ENCODE measurements at regions of chr2 and their contacts with region 1.

Region 1: DNA sequence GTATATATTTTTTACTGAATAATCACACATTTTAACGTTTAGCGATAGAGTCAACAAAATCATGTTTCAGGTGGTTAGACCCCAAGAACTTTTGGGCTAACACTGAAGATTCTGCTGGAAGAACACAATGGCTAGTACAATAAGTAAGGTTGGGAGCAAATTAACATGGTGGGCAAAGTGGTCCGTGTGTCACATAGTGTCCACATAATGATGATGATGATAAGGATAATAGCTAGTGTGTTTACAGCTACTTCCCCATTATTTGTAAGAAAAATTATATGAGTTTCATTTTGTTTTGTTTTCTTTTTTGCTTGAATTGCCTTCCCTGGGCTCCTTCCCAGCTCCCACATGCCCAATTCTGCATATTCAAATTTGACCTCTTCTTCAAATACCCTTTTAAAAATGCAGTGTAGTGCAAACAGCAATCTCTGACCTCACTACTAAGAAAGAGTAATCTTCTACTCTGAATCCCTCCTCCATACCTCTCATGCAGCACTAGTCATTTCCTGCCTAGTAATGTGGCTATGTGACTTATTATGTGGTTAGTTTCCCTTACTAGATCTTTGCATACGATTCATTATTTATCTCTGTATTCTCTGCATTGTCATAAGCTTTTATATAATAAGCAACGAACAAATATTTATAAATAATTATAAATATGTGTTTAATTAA is 16.9 kb upstream of the VPS54 start:
- DNase-seq: peak in 7 of 9 donors; percentile 60 to 75 (median 64)
- ATAC-seq: peak; percentile 98
- H3K4me3 ChIP-seq: peak overlapping the region; percentile 25
- H3K4me3 Mint-ChIP-seq: peak overlapping the region; percentile 30 to 86 (median 60)
- H3K27ac ChIP-seq: peak overlapping the region; percentile 54
- H3K27ac Mint-ChIP-seq: peak overlapping the region; percentile 49 to 93 (median 83)
- H3K4me1 ChIP-seq: peaks cover 20 to 42% of the 10 kb centered on the region in 2 donors
- H3K4me1 Mint-ChIP-seq: peaks cover 29 to 70% (median 54%) of the 10 kb centered on the region in 7 donors
- H3K27me3 ChIP-seq: no peaks in the 10 kb centered on the region
- H3K27me3 Mint-ChIP-seq: no peaks in the 10 kb centered on the region

Region 2: GRCh38 chr2:63962186-63962585 is 74.0 kb before region 1 on chr2:
- CTCF ChIA-PET with region 1: no interaction called
- POLR2A ChIA-PET with region 1: no interaction called
- intact Hi-C with region 1: loop called in 1 of 2 experiments (anchors 5 kb)
- DNase-seq: no peak
- ATAC-seq: no peak
- H3K4me3 ChIP-seq: no peak overlapping the region
- H3K4me3 Mint-ChIP-seq: no peak overlapping the region
- H3K27ac ChIP-seq: no peak overlapping the region
- H3K27ac Mint-ChIP-seq: no peak overlapping the region
- H3K4me1 ChIP-seq: no peaks in the 10 kb centered on the region
- H3K4me1 Mint-ChIP-seq: no peaks in the 10 kb centered on the region
- H3K27me3 ChIP-seq: no peaks in the 10 kb centered on the region
- H3K27me3 Mint-ChIP-seq: no peaks in the 10 kb centered on the region

Region 3: GRCh38 chr2:63977904-63978303 is 58.3 kb before region 1 on chr2:
- CTCF ChIA-PET with region 1: no interaction called
- POLR2A ChIA-PET with region 1: no interaction called
- intact Hi-C with region 1: loop called in 1 of 2 experiments (anchors 5 kb)
- DNase-seq: peak in 5 of 9 donors; percentile 9 to 25 (median 15)
- ATAC-seq: peak; percentile 57
- H3K4me3 ChIP-seq: no peak overlapping the region
- H3K4me3 Mint-ChIP-seq: peak overlapping the region in 9 of 10 donors; percentile 1 to 55 (median 36)
- H3K27ac ChIP-seq: no peak overlapping the region
- H3K27ac Mint-ChIP-seq: peak overlapping the region; percentile 11 to 75 (median 62)
- H3K4me1 ChIP-seq: peaks cover 5 to 8% of the 10 kb centered on the region in 2 donors
- H3K4me1 Mint-ChIP-seq: peaks cover 7 to 36% (median 31%) of the 10 kb centered on the region in 7 donors
- H3K27me3 ChIP-seq: no peaks in the 10 kb centered on the region
- H3K27me3 Mint-ChIP-seq: no peaks in the 10 kb centered on the region

Region 4: DNA sequence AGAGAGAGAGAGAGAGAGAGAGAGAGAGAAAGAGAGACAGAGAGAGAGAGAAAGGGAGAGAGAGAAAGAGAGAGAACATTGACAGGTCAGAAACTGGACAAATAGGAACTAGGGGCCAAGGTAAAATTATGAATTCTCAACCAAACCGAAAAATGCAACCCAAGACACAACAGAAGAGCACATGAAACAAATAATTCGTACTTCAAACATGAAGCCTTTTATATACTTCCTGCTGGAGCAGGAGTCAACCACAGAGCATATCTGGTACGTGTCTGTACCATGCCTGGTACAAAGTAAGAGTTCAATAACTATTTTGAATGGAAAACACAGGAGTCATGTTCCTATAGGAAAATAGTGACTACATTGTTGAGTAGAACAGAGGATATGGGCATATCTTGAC is 10.4 kb before region 1 on chr2:
- CTCF ChIA-PET with region 1: interaction called, 4 read pairs
- POLR2A ChIA-PET with region 1: interaction called, 19 read pairs
- intact Hi-C with region 1: loop called in 1 of 2 experiments (anchors 1 kb)
- DNase-seq: peak in 6 of 9 donors; percentile 24 to 48 (median 39)
- ATAC-seq: peak; percentile 84
- H3K4me3 ChIP-seq: no peak overlapping the region
- H3K4me3 Mint-ChIP-seq: peak overlapping the region in 9 of 10 donors; percentile 38 to 72 (median 53)
- H3K27ac ChIP-seq: no peak overlapping the region
- H3K27ac Mint-ChIP-seq: peak overlapping the region in 8 of 9 donors; percentile 5 to 84 (median 41)
- H3K4me1 ChIP-seq: peaks cover 4 to 11% of the 10 kb centered on the region in 2 donors
- H3K4me1 Mint-ChIP-seq: peaks cover 13 to 37% (median 24%) of the 10 kb centered on the region in 7 donors
- H3K27me3 ChIP-seq: no peaks in the 10 kb centered on the region
- H3K27me3 Mint-ChIP-seq: peaks cover 0 to 2% (median 0%) of the 10 kb centered on the region in 5 donors